Activated T-helper 2 cell treated with anti-CD3 and anti-CD28 coated beads, Interferon-gamma antibody, Interleukin-2, Interleukin-4, amounts not matched to agents 10 μg/mL and 5 μg/mL and 100 μg/mL, durations not matched to agents 14 hours and 24 hours and 36 hours (primary cell): ENCODE measurements at regions of chr15 and their contacts with region 1.

Region 1: GRCh38 chr15:82809404-82810060 is at the start of gene WHAMM:
- DNase-seq: peak; percentile 94
- H3K4me3 Mint-ChIP-seq: peak within 1 kb of the TSS; percentile 87
- H3K27ac Mint-ChIP-seq: peak within 1 kb of the TSS; percentile 95
- H3K4me1 Mint-ChIP-seq: peaks cover 21% of the 10 kb centered on the region
- H3K27me3 Mint-ChIP-seq: peaks cover 17% of the 10 kb centered on the region
- total RNA-seq, gene WHAMM: 4.0 and 4.2 TPM in 2 replicates

Region 2: GRCh38 chr15:82540055-82540983 is 269.2 kb before region 1 on chr15 and contains the start of gene RPS17:
- intact Hi-C with region 1: loop called (anchors 10 kb)
- DNase-seq: peak; percentile 98
- H3K4me3 Mint-ChIP-seq: peak within 1 kb of the TSS; percentile 95
- H3K27ac Mint-ChIP-seq: peak within 1 kb of the TSS; percentile 88
- H3K4me1 Mint-ChIP-seq: peaks cover 21% of the 10 kb centered on the region
- H3K27me3 Mint-ChIP-seq: peaks cover 3% of the 10 kb centered on the region
- total RNA-seq, gene RPS17: 2,500 and 2,516 TPM in 2 replicates

Region 3: DNA sequence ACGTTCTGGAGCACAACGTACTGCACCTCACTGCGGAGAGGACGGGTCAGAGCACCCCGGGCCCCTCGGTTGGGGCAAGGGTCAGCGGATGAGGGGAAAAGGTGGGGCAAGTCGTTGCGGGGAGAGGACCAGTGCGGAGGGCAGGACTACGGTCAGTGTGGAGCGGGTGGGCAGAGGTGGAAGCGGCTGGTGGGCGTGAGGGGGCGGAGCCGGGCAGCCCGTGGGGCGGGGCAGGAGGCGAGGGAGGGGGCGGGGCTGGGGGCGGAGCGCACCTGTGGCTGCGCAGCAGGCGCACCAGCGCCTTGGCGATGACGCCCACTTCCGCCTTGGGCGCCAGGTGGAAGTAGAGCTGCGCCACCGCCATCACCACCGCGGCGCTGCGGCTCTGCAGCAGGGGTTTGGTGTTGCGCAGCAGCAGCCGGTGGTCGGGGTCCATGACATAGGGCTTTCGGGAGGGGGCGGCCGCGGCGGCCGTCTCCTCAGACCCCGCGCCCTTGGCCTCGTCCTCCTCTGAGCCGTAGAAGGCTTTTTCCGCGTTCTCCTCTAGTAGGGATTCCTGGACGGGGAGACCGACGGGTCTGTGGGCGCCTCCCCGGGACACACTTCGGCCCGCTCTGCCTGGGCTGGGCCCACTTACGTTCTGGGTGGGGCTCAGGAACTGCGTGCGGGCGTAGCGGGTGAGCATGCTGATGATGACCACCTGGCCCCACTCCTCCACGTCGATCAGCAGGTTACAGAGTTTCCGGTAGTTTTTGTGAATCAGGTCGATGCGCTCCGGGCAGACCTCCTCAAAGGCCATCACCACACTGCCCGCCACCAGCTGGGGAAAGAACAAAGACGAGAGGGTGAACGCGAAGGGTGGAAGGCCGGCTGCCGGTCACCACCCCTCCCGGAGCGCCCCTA is 129.1 kb before region 1 on chr15:
- intact Hi-C with region 1: no loop called
- DNase-seq: peak; percentile 49
- H3K4me3 Mint-ChIP-seq: peak overlapping the region; percentile 69
- H3K27ac Mint-ChIP-seq: no peak overlapping the region
- H3K4me1 Mint-ChIP-seq: peaks cover 7% of the 10 kb centered on the region
- H3K27me3 Mint-ChIP-seq: peaks cover 25% of the 10 kb centered on the region

Region 4: DNA sequence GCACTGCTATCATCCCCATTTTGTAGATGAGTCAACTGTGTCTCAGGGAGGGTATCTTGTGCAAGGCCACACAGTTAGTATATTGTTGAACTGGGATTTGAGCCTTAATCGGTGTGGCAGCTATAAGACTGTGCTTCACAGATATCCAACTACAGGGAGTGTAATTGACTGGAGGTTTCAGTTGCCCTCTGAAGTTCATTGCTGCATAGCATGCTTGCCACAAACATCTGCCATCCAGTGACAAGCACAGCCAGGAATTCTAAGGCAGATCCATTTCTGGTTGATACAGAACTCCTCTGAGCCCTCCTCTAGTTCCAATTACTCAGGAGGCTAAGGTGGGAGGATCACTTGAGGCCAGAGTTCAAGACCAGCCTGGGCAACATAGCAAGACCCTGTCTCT is 20.0 kb before region 1 on chr15:
- intact Hi-C with region 1: no loop called
- DNase-seq: no peak
- H3K4me3 Mint-ChIP-seq: no peak overlapping the region
- H3K27ac Mint-ChIP-seq: no peak overlapping the region
- H3K4me1 Mint-ChIP-seq: no peaks in the 10 kb centered on the region
- H3K27me3 Mint-ChIP-seq: peaks cover 34% of the 10 kb centered on the region

Region 5: GRCh38 chr15:82832601-82833361 is 23.2 kb after region 1 on chr15:
- intact Hi-C with region 1: loop called (anchors 1 kb)
- DNase-seq: peak; percentile 30
- H3K4me3 Mint-ChIP-seq: peak overlapping the region; percentile 49
- H3K27ac Mint-ChIP-seq: peak overlapping the region; percentile 91
- H3K4me1 Mint-ChIP-seq: peaks cover 46% of the 10 kb centered on the region
- H3K27me3 Mint-ChIP-seq: no peaks in the 10 kb centered on the region

Region 6: DNA sequence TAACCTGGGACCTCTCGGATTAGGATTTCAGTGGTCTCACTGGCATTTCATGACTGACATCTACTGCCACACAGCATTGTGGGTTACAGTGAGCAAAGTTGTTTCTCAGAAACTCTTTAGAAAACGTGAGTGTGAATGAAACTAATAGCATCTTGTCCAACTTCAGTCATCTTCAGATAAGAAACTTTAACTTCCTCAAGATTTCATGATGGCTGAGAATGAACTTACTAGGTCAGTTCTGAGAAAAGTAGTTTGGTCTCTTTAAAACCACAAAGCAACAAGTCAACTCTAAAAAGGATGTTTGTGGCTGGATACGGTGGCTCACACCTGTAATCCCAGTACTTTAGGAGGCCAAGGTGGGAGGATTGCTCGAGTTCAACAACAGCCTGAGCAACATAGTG is 157.1 kb after region 1 on chr15:
- intact Hi-C with region 1: loop called (anchors 5 kb)
- DNase-seq: peak; percentile 20
- H3K4me3 Mint-ChIP-seq: no peak overlapping the region
- H3K27ac Mint-ChIP-seq: no peak overlapping the region
- H3K4me1 Mint-ChIP-seq: peaks cover 30% of the 10 kb centered on the region
- H3K27me3 Mint-ChIP-seq: peaks cover 10% of the 10 kb centered on the region

Region 7: DNA sequence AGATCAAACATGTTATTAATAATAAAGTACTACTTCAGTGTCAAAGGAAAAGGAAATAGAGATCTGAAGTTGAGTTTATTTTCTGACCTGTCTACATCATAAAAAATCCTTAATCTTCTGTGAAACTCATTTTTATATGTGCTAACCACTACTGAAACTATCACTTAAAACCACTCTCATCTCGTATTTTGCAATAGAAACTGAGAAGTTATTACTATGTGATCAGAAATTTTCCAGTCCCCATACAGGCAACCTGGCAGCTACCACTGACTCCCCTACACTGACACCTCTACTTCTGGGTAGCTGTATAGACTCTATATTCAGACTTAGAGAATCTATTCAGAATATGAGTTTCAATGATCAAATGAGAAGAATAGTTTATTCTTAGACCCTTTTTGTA is 389.8 kb after region 1 on chr15:
- intact Hi-C with region 1: loop called (anchors 5 kb)
- DNase-seq: no peak
- H3K4me3 Mint-ChIP-seq: no peak overlapping the region
- H3K27ac Mint-ChIP-seq: peak overlapping the region; percentile 57
- H3K4me1 Mint-ChIP-seq: peaks cover 22% of the 10 kb centered on the region
- H3K27me3 Mint-ChIP-seq: peaks cover 34% of the 10 kb centered on the region